ENCODE measurements at regions of chr6 and their contacts with region 1.

Region 1: GRCh38 chr6:134063966-134064445 is 11.6 kb upstream of the SLC2A12 start:
- DNase-seq: peak; percentile 77 to 86 (median 83)
- H3K4me3 ChIP-seq: no peak overlapping the region
- H3K27ac ChIP-seq: no peak overlapping the region
- H3K4me1 ChIP-seq: no peaks in the 10 kb centered on the region
- H3K27me3 ChIP-seq: peaks cover 0 to 4% (median 2%) of the 10 kb centered on the region in 5 experiments

Region 2: GRCh38 chr6:133952815-133953633 is 111.0 kb before region 1 on chr6 and contains the start of gene TBPL1:
- CTCF ChIA-PET with region 1: interaction called, 12 read pairs
- POLR2A ChIA-PET with region 1: no interaction called
- DNase-seq: peak; percentile 96 to 97 (median 97)
- H3K4me3 ChIP-seq: peak within 1 kb of the TSS; percentile 81 to 97 (median 94)
- H3K27ac ChIP-seq: peak within 1 kb of the TSS; percentile 35 to 69
- H3K4me1 ChIP-seq: peaks cover 17 to 33% (median 22%) of the 10 kb centered on the region in 4 experiments
- H3K27me3 ChIP-seq: peaks cover 0 to 2% (median 0%) of the 10 kb centered on the region in 5 experiments

Region 3: DNA sequence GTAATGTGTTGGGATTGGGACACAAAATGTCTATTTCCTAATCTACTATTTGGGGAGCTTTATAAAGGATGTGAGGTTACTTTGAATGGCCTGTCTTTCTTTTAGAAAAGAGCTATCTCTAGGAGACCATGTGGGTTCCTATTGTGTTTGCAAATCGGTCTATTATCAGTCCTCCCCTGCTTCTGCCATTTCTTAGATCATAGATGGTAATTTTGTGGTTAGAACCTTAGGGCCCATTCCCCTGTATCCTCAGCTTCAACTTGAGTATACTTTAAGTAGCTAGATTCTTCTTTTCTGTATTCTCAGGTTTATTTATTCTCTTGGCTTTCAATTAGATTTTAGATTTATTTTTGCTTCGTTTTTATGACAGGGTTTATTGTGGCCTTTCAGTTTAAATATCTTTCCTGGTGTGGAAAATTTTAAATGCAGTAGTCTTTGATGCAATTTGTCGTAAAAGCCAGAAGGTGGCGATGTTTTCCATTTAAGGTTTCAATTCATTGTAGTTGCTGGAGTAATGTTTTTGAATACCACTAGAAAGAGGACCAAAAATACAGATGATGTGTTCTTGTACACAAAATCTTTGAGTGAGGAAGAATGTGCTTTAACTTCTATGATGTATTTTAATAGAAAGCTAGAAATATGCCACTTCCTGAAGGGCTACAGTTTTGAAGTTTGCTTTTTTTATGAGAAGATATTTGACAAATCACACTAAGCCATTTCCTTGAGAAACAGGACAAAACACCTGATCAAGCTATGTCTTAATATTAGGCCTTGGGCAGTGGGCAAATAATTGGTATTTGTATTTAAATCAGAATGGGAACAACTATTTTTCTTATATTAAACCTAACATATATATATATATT is 90.7 kb before region 1 on chr6:
- CTCF ChIA-PET with region 1: interaction called, 182 read pairs
- POLR2A ChIA-PET with region 1: no interaction called
- DNase-seq: peak; percentile 54 to 75 (median 74)
- H3K4me3 ChIP-seq: no peak overlapping the region
- H3K27ac ChIP-seq: no peak overlapping the region
- H3K4me1 ChIP-seq: no peaks in the 10 kb centered on the region
- H3K27me3 ChIP-seq: no peaks in the 10 kb centered on the region

Region 4: DNA sequence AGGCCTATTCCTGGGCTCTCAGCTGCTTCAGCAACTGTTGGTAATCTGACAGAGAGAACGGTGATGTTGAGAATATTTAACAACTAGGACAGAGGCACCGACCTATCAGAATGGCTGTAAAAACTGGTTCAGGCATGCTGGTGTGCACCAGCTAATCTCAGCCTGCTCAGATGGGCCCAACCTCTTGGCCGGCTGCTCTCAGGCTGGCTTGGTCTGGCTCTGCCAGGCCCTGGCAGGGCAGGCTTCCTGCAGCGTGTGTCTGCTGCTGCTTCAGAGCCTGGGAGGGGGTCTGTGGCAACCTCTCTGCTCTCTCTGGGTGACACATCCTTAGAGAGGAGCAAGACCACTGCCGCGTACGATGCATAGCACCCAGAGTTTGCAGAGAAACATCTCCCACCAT is 16.3 kb before region 1 on chr6:
- CTCF ChIA-PET with region 1: interaction called, 28 read pairs
- POLR2A ChIA-PET with region 1: no interaction called
- DNase-seq: no peak
- H3K4me3 ChIP-seq: no peak overlapping the region
- H3K27ac ChIP-seq: no peak overlapping the region
- H3K4me1 ChIP-seq: peaks cover 0 to 8% (median 6%) of the 10 kb centered on the region in 4 experiments
- H3K27me3 ChIP-seq: peaks cover 0 to 14% (median 8%) of the 10 kb centered on the region in 5 experiments

Region 5: DNA sequence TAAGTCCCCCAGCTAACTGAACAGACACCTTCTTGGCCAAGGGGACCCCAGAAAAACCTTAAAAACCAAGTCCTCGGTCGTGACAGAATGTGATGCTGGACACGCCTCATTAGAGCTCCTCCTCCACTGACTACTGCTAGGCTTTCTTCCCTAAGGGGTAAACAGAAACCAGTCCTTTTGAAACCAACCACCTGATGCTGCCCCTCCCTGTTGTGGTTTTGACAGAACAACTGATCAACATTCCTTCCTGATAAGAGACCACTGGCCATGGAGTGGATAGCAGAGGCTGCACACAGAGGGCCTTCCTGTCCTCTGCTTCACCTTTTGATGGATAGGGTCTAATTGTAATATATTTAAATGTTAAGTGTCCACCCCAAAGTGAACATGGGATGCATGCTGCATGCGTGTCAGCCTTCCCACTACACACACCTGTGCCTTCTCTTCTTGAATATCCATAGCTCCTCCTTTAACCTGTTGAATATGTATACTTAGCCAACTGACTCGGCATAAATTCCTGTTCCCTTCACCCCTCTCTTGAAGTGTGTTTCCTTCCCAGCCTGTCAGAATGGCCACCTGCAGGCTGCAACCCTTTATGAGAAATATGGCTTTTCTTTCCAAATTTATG is 16.3 kb after region 1 on chr6:
- CTCF ChIA-PET with region 1: interaction called, 26 read pairs
- POLR2A ChIA-PET with region 1: no interaction called
- DNase-seq: peak in 2 of 3 donors; percentile 19 to 32
- H3K4me3 ChIP-seq: no peak overlapping the region
- H3K27ac ChIP-seq: no peak overlapping the region
- H3K4me1 ChIP-seq: peaks cover 0 to 5% (median 2%) of the 10 kb centered on the region in 4 experiments
- H3K27me3 ChIP-seq: peaks cover 0 to 3% (median 2%) of the 10 kb centered on the region in 5 experiments

Region 6: DNA sequence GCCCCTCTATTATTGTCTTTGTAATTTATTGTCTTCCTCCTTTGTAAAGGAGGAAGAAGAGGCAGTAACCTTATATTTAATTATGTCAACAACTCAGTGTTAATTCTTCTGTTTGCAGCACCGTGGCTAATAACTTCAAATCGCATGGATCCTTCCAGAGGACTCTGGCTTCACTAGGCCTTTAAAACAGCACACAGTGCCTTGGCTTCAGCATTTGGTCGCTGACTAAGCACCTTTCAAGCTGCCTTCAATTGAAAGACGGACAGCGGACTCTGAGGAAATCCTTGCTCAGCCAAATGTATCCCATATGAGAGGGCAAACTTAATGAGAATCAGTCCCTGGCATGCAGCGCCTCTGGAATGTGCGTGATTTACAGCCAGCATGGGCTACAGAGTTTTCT is 189.7 kb after region 1 on chr6:
- CTCF ChIA-PET with region 1: no interaction called
- POLR2A ChIA-PET with region 1: no interaction called
- DNase-seq: peak in 1 of 3 donors; percentile 18
- H3K4me3 ChIP-seq: no peak overlapping the region
- H3K27ac ChIP-seq: no peak overlapping the region
- H3K4me1 ChIP-seq: peaks cover 0 to 10% (median under 1%) of the 10 kb centered on the region in 4 experiments
- H3K27me3 ChIP-seq: no peaks in the 10 kb centered on the region

Measured in common myeloid progenitor, CD34-positive (primary cell).